Activated CD8-positive, alpha-beta memory T cell treated with anti-CD3 and anti-CD28 coated beads, Interleukin-2, amount 10 ng/mL, durations not matched to agents 7 days and 5 days (primary cell): ENCODE measurements at regions of chr2 and their contacts with region 1.

Region 1: GRCh38 chr2:96407041-96407918 is 71.7 kb downstream of the NCAPH start:
- DNase-seq: peak; percentile 85
- ATAC-seq: peak; percentile 90
- H3K4me3 Mint-ChIP-seq: peak overlapping the region; percentile 31
- H3K27ac Mint-ChIP-seq: peak overlapping the region; percentile 85
- H3K4me1 Mint-ChIP-seq: peaks cover 24% of the 10 kb centered on the region
- H3K27me3 Mint-ChIP-seq: no peaks in the 10 kb centered on the region

Region 2: DNA sequence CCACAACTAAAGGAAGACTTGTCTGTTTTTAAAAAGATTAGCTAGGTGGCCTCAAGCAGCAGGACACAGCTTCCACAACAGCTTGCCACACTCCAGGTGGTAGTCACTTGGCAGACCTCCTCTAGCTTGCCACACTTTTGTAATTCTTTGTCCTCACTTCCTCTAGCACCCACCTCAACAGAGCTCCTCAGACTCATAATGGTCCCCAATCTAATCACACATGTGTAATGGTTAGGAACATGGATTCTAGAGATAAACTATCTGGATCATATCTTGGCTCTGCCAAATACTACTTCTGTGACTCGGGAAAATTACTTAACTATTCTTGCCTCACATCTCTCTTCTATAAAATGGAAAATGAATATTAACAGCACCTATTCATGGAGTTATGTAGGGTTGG is 105.4 kb before region 1 on chr2:
- CTCF ChIA-PET with region 1: no interaction called
- DNase-seq: no peak
- ATAC-seq: no peak
- H3K4me3 Mint-ChIP-seq: no peak overlapping the region
- H3K27ac Mint-ChIP-seq: peak overlapping the region; percentile 13
- H3K4me1 Mint-ChIP-seq: peaks cover 50% of the 10 kb centered on the region
- H3K27me3 Mint-ChIP-seq: no peaks in the 10 kb centered on the region

Region 3: DNA sequence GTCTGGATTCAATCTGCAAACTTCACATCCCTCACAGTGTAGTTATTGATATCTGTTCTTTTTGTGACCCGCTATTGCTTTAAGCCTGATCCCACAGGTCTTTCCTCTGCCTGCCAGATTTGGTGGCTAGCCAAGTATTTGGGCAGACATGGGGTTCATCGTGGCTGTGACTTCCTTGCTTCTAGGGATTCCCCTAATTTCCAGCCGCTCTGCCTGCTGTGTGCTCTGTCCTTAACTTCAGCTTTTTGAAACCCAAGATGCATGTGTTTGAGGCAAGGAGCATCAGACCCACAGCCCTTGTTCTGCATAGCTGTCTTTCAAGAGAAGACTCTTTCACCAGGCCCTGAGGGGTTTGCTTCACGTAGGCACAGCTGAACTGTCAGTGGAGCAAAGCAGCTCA is 17.5 kb before region 1 on chr2:
- CTCF ChIA-PET with region 1: interaction called, 18 read pairs
- DNase-seq: no peak
- ATAC-seq: no peak
- H3K4me3 Mint-ChIP-seq: no peak overlapping the region
- H3K27ac Mint-ChIP-seq: no peak overlapping the region
- H3K4me1 Mint-ChIP-seq: peaks cover 13% of the 10 kb centered on the region
- H3K27me3 Mint-ChIP-seq: peaks cover 4% of the 10 kb centered on the region

Region 4: DNA sequence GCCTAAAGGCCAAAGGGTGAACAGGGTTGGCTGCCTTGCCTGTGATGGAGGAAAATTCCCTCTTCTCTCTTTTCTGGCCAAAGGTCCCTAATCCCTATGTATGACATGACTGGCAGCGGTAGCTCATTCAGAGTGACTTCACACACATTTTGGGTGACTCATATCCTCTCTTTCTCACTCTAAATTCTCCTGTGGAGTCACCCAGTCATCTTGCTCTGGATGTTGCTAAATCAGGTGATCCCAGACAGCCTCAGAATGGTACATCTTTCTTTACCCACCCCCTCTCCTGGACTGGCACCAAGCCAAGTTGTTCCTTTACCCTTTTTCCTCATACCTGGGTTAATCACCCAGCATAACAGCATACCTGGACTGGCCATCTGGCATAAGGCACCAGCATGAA is 20.6 kb after region 1 on chr2:
- CTCF ChIA-PET with region 1: interaction called, 28 read pairs
- DNase-seq: peak; percentile 46
- ATAC-seq: peak; percentile 83
- H3K4me3 Mint-ChIP-seq: no peak overlapping the region
- H3K27ac Mint-ChIP-seq: no peak overlapping the region
- H3K4me1 Mint-ChIP-seq: peaks cover 6% of the 10 kb centered on the region
- H3K27me3 Mint-ChIP-seq: peaks cover 17% of the 10 kb centered on the region

Region 5: DNA sequence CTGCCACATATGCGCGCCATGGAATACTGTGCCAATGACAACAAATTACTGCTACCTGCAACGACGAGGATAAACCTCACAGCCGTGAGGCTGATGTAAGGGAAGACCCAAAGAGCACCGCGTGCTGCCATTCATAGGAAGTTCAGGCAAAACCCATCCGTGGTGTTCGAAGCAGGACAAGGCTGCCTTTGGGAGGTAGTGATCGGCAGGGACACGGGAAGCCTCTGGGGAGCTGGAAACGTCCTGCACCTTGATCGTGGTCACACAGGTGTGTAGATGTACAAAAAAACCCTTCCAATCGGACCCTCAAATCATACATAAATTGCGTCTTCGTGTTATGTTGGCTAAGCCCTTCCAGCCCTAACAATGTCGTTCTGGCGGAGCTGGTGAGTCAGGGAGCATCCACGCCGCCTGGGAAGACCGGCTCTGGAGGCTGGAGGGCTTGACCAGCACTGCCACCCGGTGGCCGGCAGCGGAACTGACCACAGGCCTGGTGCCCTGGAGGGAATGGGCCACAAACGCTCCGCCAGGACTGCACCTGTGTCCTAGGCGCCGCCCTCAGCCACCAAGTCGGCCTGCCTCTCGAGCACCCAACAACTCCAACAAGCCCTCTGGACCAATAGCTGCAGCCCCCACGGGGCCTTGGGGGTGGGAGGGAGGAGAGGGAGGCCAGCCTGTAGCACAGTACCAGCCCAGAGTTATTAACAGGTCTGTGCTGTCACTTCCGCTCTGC is 102.0 kb after region 1 on chr2:
- CTCF ChIA-PET with region 1: interaction called, 157 read pairs
- DNase-seq: peak; percentile 69
- ATAC-seq: peak; percentile 35
- H3K4me3 Mint-ChIP-seq: no peak overlapping the region
- H3K27ac Mint-ChIP-seq: no peak overlapping the region
- H3K4me1 Mint-ChIP-seq: peaks cover 27% of the 10 kb centered on the region
- H3K27me3 Mint-ChIP-seq: no peaks in the 10 kb centered on the region

Region 6: DNA sequence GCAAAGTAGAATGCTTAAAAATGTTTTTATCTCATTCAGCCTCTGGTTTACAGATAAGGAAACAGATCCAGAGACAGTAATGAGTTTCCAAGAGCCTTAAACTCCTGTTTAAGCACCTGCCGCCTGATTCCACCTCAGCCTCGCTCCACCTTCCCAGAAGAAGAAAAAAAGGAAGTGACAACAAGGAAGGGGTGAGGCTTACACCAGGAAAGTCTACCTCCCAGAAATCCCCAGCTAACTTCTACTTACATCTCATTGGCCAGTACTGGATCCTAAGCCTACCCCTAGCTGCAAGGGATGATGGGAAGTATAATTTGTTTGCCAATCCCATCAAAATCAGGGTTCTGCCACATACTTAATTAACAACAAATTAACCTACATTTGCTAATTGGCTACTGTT is 113.9 kb after region 1 on chr2:
- CTCF ChIA-PET with region 1: interaction called, 14 read pairs
- DNase-seq: no peak
- ATAC-seq: no peak
- H3K4me3 Mint-ChIP-seq: no peak overlapping the region
- H3K27ac Mint-ChIP-seq: no peak overlapping the region
- H3K4me1 Mint-ChIP-seq: peaks cover 53% of the 10 kb centered on the region
- H3K27me3 Mint-ChIP-seq: no peaks in the 10 kb centered on the region

Region 7: GRCh38 chr2:96527286-96528005 is 120.2 kb after region 1 on chr2:
- CTCF ChIA-PET with region 1: interaction called, 10 read pairs
- DNase-seq: peak; percentile 88
- ATAC-seq: peak; percentile 43
- H3K4me3 Mint-ChIP-seq: peak overlapping the region; percentile 65
- H3K27ac Mint-ChIP-seq: peak overlapping the region; percentile 88
- H3K4me1 Mint-ChIP-seq: peaks cover 94% of the 10 kb centered on the region
- H3K27me3 Mint-ChIP-seq: no peaks in the 10 kb centered on the region

Region 8: GRCh38 chr2:96536445-96537065 is 129.3 kb after region 1 on chr2 and contains the start of gene ARID5A:
- CTCF ChIA-PET with region 1: interaction called, 11 read pairs
- DNase-seq: peak; percentile 95
- ATAC-seq: peak; percentile 73
- H3K4me3 Mint-ChIP-seq: peak within 1 kb of the TSS; percentile 90
- H3K27ac Mint-ChIP-seq: peak within 1 kb of the TSS; percentile 94
- H3K4me1 Mint-ChIP-seq: peaks cover 70% of the 10 kb centered on the region
- H3K27me3 Mint-ChIP-seq: no peaks in the 10 kb centered on the region
- total RNA-seq, gene ARID5A: 57.9 to 70.5 TPM